Body of pancreas (tissue), 4 donors: ENCODE measurements at regions of chr3 and their contacts with region 1.

Region 1: GRCh38 chr3:181709537-181710279 is 2.0 kb upstream of the SOX2 start:
- DNase-seq: peak; percentile 69 to 84 (median 76)
- ATAC-seq: peak; percentile 39
- H3K4me3 ChIP-seq: no peak overlapping the region
- H3K27ac ChIP-seq: no peak overlapping the region
- H3K4me1 ChIP-seq: peaks cover 34% of the 10 kb centered on the region
- H3K27me3 ChIP-seq: peaks cover 0 to 57% of the 10 kb centered on the region in 2 donors
- CTCF ChIP-seq: peak; percentile 59 to 87 (median 81)
- POLR2A ChIP-seq: no peak

Region 2: DNA sequence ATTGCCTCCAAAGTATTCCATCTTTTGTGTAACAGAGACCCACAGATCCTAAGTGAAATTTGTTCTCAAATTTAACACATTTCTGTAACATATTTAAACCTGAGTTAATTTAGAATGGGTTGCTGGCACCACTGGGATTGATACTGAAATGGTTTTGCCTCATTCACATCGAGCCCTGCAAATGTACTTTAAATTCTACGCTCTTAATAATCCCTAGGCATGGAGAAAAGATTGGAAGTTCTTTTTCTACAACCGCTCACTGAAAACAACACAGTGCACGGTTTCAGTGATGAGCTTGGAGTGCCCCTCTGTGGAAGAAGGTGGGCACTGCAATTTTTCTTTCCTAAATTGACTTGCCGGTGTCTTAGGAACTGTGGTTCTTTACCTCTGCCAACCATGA is 973.7 kb after region 1 on chr3:
- intact Hi-C with region 1: loop called (anchors 5 kb)
- DNase-seq: peak; percentile 69 to 78 (median 72)
- ATAC-seq: peak; percentile 91
- H3K4me3 ChIP-seq: no peak overlapping the region
- H3K27ac ChIP-seq: no peak overlapping the region
- H3K4me1 ChIP-seq: peaks cover 17% of the 10 kb centered on the region
- H3K27me3 ChIP-seq: peaks cover 0 to 14% of the 10 kb centered on the region in 2 donors
- CTCF ChIP-seq: peak; percentile 79 to 95 (median 91)
- POLR2A ChIP-seq: no peak